ENCODE measurements at regions of chr3 and their contacts with region 1.

Region 1: DNA sequence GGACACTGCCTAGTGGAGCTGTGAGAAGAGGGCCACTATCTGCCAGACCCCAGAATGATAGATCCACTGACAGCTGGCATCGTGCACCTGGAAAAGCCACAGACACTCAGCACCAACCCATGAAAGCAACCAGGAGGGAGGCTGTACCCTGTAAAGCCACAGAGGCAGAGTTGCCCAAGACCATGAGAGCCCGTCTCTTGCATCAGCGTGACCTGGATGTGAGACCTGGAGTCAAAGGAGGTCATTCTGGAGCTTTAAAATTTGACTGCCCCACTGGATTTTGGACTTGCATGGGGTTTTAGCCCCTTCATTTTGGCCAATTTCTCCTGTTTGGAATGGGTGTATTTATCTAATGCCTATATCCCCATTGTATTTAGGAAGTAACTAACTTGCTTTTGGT is 83.5 kb upstream of the P3H2 start:
- DNase-seq: no peak
- ATAC-seq: no peak
- H3K4me3 ChIP-seq: no peak overlapping the region
- H3K4me1 ChIP-seq: no peaks in the 10 kb centered on the region
- CTCF ChIP-seq: no peak

Region 2: DNA sequence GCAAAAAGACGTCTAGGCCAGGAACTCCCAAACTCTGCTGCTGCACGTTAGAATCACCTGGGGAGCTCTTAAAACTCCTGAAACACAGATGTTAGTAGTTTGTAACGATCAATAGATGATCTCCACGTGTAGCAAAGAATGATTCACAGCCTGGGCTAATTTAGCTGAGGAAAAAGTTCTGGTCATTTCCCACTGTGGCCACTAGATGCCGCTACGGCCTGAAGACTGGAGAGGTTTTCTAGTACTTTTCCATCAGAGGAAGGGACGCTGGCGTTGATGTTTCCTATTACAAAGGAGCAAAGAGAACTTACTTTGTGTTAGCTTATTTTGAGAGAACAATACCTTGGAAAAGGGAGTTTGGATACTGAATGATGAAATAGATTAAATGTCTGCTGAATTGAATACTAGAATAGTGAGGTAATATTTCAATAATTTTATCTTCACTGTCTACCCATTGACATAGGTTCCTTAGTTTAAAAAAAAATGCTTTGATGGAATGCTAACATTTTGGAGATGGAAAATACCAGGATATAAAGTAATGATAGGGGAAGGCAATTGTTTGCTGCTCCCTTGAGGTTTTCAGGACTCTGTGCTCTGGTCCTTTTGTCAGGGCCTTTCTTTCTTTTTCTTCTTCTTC is 242.6 kb before region 1 on chr3:
- intact Hi-C with region 1: loop called (anchors 5 kb)
- DNase-seq: peak in 2 of 3 donors; percentile 75 to 83
- ATAC-seq: peak; percentile 94
- H3K4me3 ChIP-seq: no peak overlapping the region
- H3K4me1 ChIP-seq: no peaks in the 10 kb centered on the region
- CTCF ChIP-seq: peak; percentile 76

Region 3: GRCh38 chr3:189967254-189967865 is 236.8 kb before region 1 on chr3:
- intact Hi-C with region 1: loop called (anchors 5 kb)
- DNase-seq: peak in 1 of 3 donors; percentile 74
- ATAC-seq: peak; percentile 43
- H3K4me3 ChIP-seq: no peak overlapping the region
- H3K4me1 ChIP-seq: no peaks in the 10 kb centered on the region
- CTCF ChIP-seq: peak; percentile 68

Measured in mucosa of descending colon (tissue), 3 donors.